Activated CD4-positive, alpha-beta T cell treated with anti-CD3 and anti-CD28 coated beads for 36 hours (primary cell): ENCODE measurements at regions of chr4 and their contacts with region 1.

Region 1: GRCh38 chr4:7857238-7857701 is 82.4 kb downstream of the AFAP1 start:
- DNase-seq: no peak
- ATAC-seq: peak; percentile 69
- H3K4me3 Mint-ChIP-seq: peak overlapping the region; percentile 15
- H3K27ac Mint-ChIP-seq: peak overlapping the region; percentile 93
- H3K4me1 Mint-ChIP-seq: peaks cover 69% of the 10 kb centered on the region
- H3K27me3 Mint-ChIP-seq: no peaks in the 10 kb centered on the region

Region 2: GRCh38 chr4:6461301-6462165 is 1395.7 kb before region 1 on chr4:
- CTCF ChIA-PET with region 1: no interaction called
- POLR2A ChIA-PET with region 1: no interaction called
- intact Hi-C with region 1: no loop called
- DNase-seq: no peak
- ATAC-seq: no peak
- H3K4me3 Mint-ChIP-seq: no peak overlapping the region
- H3K27ac Mint-ChIP-seq: no peak overlapping the region
- H3K4me1 Mint-ChIP-seq: no peaks in the 10 kb centered on the region
- H3K27me3 Mint-ChIP-seq: peaks cover 30% of the 10 kb centered on the region

Region 3: DNA sequence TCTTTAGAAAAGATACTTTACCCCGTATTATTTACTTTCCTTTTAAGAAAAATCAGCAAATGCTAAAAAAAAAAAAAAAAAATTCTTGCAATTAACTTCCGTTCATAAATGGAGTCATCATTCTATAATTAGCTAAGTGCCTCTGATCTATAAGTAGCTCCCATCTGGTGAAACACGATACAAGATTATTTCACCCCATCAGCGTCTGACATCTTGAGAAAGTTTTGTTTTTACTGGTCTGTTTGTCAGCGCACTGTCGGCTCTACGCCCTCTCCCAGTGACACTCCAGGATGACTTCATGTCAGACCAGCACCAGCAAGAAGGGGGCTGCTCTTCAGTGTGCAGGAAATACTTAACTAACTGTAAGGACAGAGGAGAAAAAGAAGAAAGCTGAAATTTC is 25.9 kb before region 1 on chr4:
- CTCF ChIA-PET with region 1: no interaction called
- POLR2A ChIA-PET with region 1: interaction called, 4 read pairs
- intact Hi-C with region 1: loop called in 1 of 2 experiments (anchors 1 kb)
- DNase-seq: peak; percentile 63
- ATAC-seq: peak; percentile 87
- H3K4me3 Mint-ChIP-seq: no peak overlapping the region
- H3K27ac Mint-ChIP-seq: peak overlapping the region; percentile 69
- H3K4me1 Mint-ChIP-seq: peaks cover 56% of the 10 kb centered on the region
- H3K27me3 Mint-ChIP-seq: no peaks in the 10 kb centered on the region

Region 4: GRCh38 chr4:7929118-7929951 is 72.1 kb after region 1 on chr4:
- CTCF ChIA-PET with region 1: no interaction called
- POLR2A ChIA-PET with region 1: no interaction called
- intact Hi-C with region 1: no loop called
- DNase-seq: no peak
- ATAC-seq: no peak
- H3K4me3 Mint-ChIP-seq: no peak overlapping the region
- H3K27ac Mint-ChIP-seq: no peak overlapping the region
- H3K4me1 Mint-ChIP-seq: peaks cover 19% of the 10 kb centered on the region
- H3K27me3 Mint-ChIP-seq: no peaks in the 10 kb centered on the region

Region 5: DNA sequence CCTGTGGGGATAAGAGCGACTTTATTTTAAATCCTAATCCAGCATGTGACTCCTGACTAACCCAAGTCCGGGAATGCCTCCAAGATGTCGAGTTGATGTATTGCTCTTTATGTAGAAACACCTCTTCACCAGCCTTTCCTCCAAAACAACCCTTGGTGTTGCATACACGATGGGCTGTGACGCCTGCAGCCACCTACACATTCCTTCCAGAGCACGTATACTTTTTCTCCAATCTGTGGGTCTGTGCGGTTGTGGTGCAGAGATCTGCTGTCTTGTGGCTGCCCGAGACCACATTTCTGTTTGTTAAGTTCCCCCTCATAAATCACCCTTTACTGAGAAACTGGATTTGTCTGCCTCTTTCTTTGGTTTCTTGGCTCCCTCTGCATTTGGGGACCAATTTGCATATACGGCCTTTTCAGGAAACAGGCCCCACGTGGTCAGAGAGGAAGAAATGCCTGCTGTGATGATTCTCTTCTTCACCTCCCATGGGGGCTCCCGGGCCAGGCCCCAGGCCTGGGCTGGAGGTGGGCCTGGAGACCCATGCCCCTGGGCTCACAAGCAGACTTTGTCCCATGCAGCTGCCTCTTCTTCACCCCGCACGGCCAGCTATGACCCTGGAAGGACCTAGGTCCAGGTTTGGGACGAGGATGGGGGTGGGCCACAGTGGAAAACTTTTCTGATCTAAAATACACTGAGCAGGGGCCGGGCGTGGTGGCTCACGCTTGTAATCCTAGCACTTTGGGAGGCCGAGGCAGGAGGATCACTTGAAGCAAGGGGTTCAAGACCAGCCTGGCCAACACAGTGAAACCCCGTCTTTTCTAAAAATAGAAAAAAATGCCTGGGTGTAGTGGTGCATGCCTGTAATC is 103.8 kb after region 1 on chr4:
- CTCF ChIA-PET with region 1: no interaction called
- POLR2A ChIA-PET with region 1: no interaction called
- intact Hi-C with region 1: loop called (anchors 1 to 5 kb)
- DNase-seq: peak; percentile 91
- ATAC-seq: peak; percentile 73
- H3K4me3 Mint-ChIP-seq: peak overlapping the region; percentile 51
- H3K27ac Mint-ChIP-seq: peak overlapping the region; percentile 91
- H3K4me1 Mint-ChIP-seq: peaks cover 62% of the 10 kb centered on the region
- H3K27me3 Mint-ChIP-seq: peaks cover 5% of the 10 kb centered on the region

Region 6: GRCh38 chr4:7967501-7968261 is 110.4 kb after region 1 on chr4:
- CTCF ChIA-PET with region 1: no interaction called
- POLR2A ChIA-PET with region 1: interaction called, 3 read pairs
- intact Hi-C with region 1: loop called (anchors 2 to 5 kb)
- DNase-seq: peak; percentile 36
- ATAC-seq: no peak
- H3K4me3 Mint-ChIP-seq: no peak overlapping the region
- H3K27ac Mint-ChIP-seq: peak overlapping the region; percentile 22
- H3K4me1 Mint-ChIP-seq: peaks cover 71% of the 10 kb centered on the region
- H3K27me3 Mint-ChIP-seq: peaks cover under 1% of the 10 kb centered on the region

Region 7: DNA sequence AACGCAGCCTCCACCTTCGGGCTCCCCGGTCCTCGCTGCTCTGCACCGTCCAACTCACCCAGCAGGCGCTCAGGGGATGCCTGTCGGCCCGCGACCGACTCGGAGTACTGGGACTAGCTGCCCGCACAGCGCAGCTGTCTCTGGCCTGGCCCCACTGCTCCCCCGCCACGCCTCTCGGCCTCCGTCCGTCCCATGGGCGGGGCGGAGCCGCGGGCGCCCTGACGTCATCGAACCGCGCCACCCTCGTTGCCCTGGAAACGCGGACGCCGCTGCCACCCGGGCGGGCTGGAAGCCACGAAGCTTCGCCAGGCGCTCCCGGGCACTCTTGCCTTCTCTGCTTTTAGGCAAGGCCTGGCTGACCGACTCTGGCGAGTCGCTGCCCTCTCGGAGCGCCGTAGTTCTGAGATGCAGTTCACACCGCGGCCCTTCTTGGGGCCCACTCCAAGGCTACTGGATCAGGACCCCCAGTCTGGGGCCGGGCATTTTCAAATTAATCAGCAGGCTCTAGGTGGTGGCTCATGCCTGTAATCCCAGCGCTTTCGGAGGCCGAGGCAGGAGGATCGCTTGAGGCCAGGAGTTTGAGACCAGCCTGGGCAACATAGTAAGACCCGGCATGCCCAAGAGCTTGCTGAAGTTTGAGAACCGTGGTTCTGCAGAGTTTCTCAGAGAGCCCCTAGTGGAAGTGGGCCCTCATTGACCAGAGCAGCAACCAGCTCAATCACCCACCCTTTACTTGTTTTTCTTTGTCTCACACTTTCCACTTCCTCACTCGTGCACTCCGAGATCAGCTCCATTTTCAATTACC is 571.2 kb after region 1 on chr4:
- CTCF ChIA-PET with region 1: no interaction called
- POLR2A ChIA-PET with region 1: no interaction called
- intact Hi-C with region 1: loop called in 1 of 2 experiments (anchors 10 kb)
- DNase-seq: peak; percentile 93
- ATAC-seq: peak; percentile 95
- H3K4me3 Mint-ChIP-seq: peak overlapping the region; percentile 93
- H3K27ac Mint-ChIP-seq: peak overlapping the region; percentile 91
- H3K4me1 Mint-ChIP-seq: peaks cover 27% of the 10 kb centered on the region
- H3K27me3 Mint-ChIP-seq: no peaks in the 10 kb centered on the region